ENCODE measurements at regions of chr6 and their contacts with region 1.

Region 1: GRCh38 chr6:132643547-132643946 is 15.4 kb downstream of the TAAR1 start:
- DNase-seq: no peak
- ATAC-seq: no peak
- H3K4me3 Mint-ChIP-seq: no peak overlapping the region
- H3K27ac Mint-ChIP-seq: no peak overlapping the region
- H3K4me1 Mint-ChIP-seq: peaks cover 2% of the 10 kb centered on the region
- H3K27me3 Mint-ChIP-seq: peaks cover 4% of the 10 kb centered on the region

Region 2: GRCh38 chr6:132633362-132633761 is 10.2 kb before region 1 on chr6:
- CTCF ChIA-PET with region 1: no interaction called
- POLR2A ChIA-PET with region 1: no interaction called
- intact Hi-C with region 1: loop called in 1 of 2 experiments (anchors 1 kb)
- DNase-seq: no peak
- ATAC-seq: no peak
- H3K4me3 Mint-ChIP-seq: no peak overlapping the region
- H3K27ac Mint-ChIP-seq: no peak overlapping the region
- H3K4me1 Mint-ChIP-seq: no peaks in the 10 kb centered on the region
- H3K27me3 Mint-ChIP-seq: peaks cover 39% of the 10 kb centered on the region